Sciatic nerve (tissue), 2 donors: ENCODE measurements at regions of chr1 and their contacts with region 1.

Region 1: GRCh38 chr1:69589799-69590198 is 22.1 kb downstream of the LRRC7 start:
- DNase-seq: no peak
- ATAC-seq: no peak

Region 2: GRCh38 chr1:69513621-69514020 is 76.2 kb before region 1 on chr1:
- intact Hi-C with region 1: no loop called
- DNase-seq: no peak
- ATAC-seq: no peak

Region 3: GRCh38 chr1:69611316-69611715 is 21.5 kb after region 1 on chr1:
- intact Hi-C with region 1: loop called (anchors 1 kb)
- DNase-seq: no peak
- ATAC-seq: no peak

Region 4: DNA sequence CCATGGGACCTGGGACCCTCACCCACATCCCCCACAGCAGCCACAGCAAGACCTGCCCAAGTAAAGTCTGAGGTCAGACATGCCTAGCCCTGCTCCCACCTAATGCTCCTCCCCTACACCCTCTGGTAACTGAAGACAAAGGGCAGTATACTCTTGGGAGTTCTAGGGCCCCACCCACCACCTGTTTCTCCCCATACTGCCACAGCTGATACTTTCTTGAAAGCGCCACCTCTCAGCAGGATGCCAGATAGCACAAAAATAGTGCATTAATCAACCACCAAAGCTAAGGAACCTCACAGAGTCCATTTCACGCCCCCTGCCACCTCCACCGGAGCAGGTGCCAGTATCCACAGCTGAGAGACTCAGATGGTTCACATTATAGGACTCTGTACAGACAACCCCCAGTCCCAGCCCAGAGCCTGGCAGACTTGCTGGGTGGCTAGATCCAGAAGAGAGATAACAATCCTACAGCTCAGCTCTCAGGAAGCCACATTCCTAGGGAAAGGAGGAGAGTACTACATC is 377.5 kb after region 1 on chr1:
- intact Hi-C with region 1: no loop called
- DNase-seq: no peak
- ATAC-seq: no peak